Psoas muscle (tissue), 8 donors: ENCODE measurements at regions of chr10 and their contacts with region 1.

Region 1: DNA sequence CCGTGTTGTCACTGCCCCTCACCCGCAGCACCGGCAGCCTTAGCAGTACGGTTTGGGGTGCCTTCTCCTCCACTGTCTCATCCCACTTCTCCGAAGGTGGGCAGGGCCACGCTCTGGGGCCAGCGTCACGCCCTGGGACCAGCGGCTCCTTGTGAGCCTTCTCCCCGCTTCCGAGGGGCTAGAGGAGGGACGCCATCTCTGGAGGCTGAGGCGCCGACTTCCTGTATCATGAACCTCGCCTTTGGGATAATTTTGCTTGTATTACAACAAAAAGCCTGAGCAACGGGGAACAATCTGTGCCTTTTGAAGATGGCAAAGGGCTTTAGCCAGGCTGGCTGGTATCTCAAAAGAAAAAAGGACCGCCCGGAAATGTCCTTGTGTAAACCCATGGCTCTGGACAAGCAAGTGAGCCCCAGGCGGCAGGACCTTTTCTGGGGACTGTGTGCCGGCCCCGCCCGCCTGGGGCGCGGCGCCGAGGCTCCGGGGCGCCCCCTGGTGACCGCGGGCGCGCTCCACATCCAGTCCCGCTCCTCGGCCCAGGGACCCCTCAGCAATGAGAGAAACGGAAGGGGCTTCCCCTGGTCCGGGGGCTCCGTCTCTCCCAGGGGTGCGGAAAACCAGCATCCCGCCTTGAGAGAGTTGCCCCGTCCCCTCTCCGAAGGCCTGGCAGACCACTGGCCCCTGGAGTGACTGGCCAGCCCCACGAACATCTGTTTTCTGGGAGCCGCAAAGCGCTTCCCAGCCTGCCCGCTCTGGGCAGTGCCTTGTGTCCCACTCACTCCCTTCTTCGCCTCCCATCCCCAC is 3.8 kb downstream of the DEPP1 start:
- DNase-seq: peak; percentile 78 to 87
- ATAC-seq: peak; percentile 69 to 78 (median 70)
- H3K4me3 ChIP-seq: peak overlapping the region; percentile 61
- H3K27ac ChIP-seq: peak overlapping the region; percentile 96
- H3K4me1 ChIP-seq: peaks cover 53% of the 10 kb centered on the region
- H3K27me3 ChIP-seq: no peaks in the 10 kb centered on the region
- CTCF ChIP-seq: peak; percentile 98

Region 2: GRCh38 chr10:44682507-44682906 is 292.3 kb before region 1 on chr10:
- intact Hi-C with region 1: no loop called
- DNase-seq: peak in 1 of 2 donors; percentile 54
- ATAC-seq: no peak
- H3K4me3 ChIP-seq: no peak overlapping the region
- H3K27ac ChIP-seq: no peak overlapping the region
- H3K4me1 ChIP-seq: no peaks in the 10 kb centered on the region
- H3K27me3 ChIP-seq: no peaks in the 10 kb centered on the region
- CTCF ChIP-seq: no peak

Region 3: DNA sequence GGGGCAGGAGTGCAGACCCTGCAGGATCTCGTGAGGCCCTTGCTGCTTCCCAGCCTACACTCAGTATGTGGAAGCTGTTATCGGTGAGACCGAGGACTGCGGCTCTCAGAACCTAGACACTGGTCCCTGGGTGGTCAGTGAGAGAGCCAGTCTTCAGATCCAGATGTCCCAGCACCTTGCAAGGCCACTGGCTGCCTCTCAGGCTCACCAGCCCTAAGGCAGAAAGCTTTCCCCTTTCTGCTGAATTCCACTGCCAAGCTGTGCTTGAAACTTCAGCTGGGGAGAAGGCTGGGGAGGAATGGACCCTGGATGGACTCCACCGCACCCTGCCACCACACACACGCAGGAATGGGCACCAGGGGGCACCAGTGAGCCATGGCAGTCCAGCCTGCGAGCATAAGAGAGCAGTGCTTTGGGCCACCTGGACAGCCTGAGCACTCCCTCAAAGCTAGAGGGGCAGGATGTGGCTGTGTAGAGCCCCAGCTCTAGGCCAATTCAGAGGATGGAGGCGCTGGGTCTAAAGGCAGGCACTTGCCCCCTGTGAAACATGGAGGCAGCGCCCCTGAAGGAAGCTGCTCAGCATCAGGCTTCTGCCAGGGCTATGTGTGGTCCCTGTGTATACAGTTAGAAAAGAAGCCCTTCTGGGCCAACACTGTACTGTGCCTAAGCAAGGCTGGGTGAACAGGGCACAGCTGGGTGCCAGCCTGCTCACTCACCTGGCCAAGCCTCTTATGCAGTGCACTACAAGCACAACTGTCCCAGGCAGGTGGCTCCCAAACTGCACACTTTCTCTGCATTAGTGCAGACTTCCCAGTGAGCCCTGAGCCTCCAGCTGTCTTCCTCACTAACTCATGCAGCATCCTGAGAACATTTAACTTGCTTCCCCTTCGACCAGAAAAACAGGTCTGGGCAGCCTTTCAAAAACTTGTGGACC is 42.0 kb before region 1 on chr10:
- intact Hi-C with region 1: loop called (anchors 1 to 2 kb)
- DNase-seq: peak; percentile 93 to 96
- ATAC-seq: peak; percentile 94 to 97 (median 96)
- H3K4me3 ChIP-seq: no peak overlapping the region
- H3K27ac ChIP-seq: no peak overlapping the region
- H3K4me1 ChIP-seq: peaks cover 18% of the 10 kb centered on the region
- H3K27me3 ChIP-seq: no peaks in the 10 kb centered on the region
- CTCF ChIP-seq: peak; percentile 94